Heart right ventricle (tissue), 16 donors: ENCODE measurements at regions of chr9 and their contacts with region 1.

Region 1: GRCh38 chr9:127943731-127944144 is 6.1 kb upstream of the DPM2 start:
- DNase-seq: peak; percentile 86
- ATAC-seq: peak; percentile 64 to 88 (median 82)
- H3K4me3 ChIP-seq: no peak overlapping the region
- H3K27ac ChIP-seq: peak overlapping the region in 1 of 10 donors; percentile 1
- H3K4me1 ChIP-seq: peaks cover 0 to 61% (median 17%) of the 10 kb centered on the region in 9 donors
- H3K27me3 ChIP-seq: no peaks in the 10 kb centered on the region
- CTCF ChIP-seq: peak; percentile 81 to 96 (median 89)

Region 2: GRCh38 chr9:127980706-127981558 is 37.2 kb after region 1 on chr9 and contains the start of gene EEIG1:
- intact Hi-C with region 1: loop called in 3 of 10 experiments (anchors 2 to 5 kb)
- DNase-seq: peak; percentile 96 to 98
- ATAC-seq: peak; percentile 94 to 97 (median 96)
- H3K4me3 ChIP-seq: peak within 1 kb of the TSS; percentile 60 to 97 (median 81)
- H3K27ac ChIP-seq: peak within 1 kb of the TSS; percentile 52 to 94 (median 92)
- H3K4me1 ChIP-seq: peaks cover 19 to 64% (median 50%) of the 10 kb centered on the region in 9 donors
- H3K27me3 ChIP-seq: peaks cover 0 to 7% (median 0%) of the 10 kb centered on the region in 7 donors
- CTCF ChIP-seq: no peak
- total RNA-seq, gene EEIG1: 11.1 to 33.5 (median 25.1) TPM

Region 3: GRCh38 chr9:128020692-128021091 is 77.0 kb after region 1 on chr9:
- intact Hi-C with region 1: no loop called
- DNase-seq: no peak
- ATAC-seq: no peak
- H3K4me3 ChIP-seq: no peak overlapping the region
- H3K27ac ChIP-seq: no peak overlapping the region
- H3K4me1 ChIP-seq: peaks cover 0 to 32% (median 0%) of the 10 kb centered on the region in 9 donors
- H3K27me3 ChIP-seq: no peaks in the 10 kb centered on the region
- CTCF ChIP-seq: peak in 4 of 9 donors; percentile 17 to 29 (median 21)

Region 4: DNA sequence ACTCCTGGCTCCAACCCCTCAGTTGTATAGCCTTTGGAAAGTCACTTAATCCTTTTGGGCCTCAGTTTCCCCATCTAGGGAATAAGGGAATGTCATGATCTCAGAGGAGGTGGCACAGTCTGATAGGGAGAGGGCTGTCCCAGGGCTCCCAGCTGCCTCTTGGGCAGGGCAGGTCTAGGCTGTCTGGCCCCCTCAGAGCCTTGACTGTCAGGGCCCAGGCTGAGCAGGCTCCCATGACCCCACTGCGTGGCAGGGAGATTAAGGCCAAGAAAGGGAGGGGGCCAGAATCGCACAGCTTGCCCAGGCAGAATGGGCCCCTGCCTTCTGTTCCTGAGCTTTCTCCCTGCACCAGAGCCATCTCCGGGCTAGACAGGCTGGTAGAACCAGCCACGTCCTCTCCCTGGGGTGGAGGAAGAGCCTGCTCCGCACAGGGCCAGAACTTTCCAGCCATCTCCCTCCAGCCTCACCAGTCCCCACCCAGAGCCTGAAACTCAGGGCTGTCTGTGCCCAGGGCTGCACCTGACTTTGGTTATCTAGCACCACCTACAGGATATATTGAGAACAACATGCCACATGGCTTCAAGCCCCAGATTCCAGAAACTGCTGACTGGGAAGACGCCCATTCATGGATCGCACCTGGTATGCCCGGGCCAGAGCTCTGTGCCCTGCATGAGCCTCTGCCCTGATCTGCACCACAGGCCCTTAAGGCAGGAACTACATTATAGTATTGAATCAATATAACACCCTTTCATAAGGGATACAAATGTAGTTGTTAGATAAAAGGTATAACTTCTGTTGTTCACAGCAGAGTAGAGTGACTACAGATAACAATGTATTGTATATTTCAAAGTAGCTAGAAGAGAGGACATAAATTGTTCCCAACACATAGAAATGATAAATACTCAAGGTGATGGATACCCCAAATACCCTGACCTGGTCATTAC is 91.4 kb after region 1 on chr9:
- intact Hi-C with region 1: loop called (anchors 1 to 5 kb)
- DNase-seq: peak; percentile 44 to 71
- ATAC-seq: peak; percentile 93 to 98 (median 94)
- H3K4me3 ChIP-seq: no peak overlapping the region
- H3K27ac ChIP-seq: peak overlapping the region in 2 of 10 donors; percentile 21 to 25
- H3K4me1 ChIP-seq: peaks cover 0 to 10% (median 4%) of the 10 kb centered on the region in 9 donors
- H3K27me3 ChIP-seq: no peaks in the 10 kb centered on the region
- CTCF ChIP-seq: peak; percentile 69 to 90 (median 87)

Region 5: GRCh38 chr9:128043467-128043868 is 99.7 kb after region 1 on chr9:
- intact Hi-C with region 1: loop called in 1 of 10 experiments (anchors 5 kb)
- DNase-seq: no peak
- ATAC-seq: no peak
- H3K4me3 ChIP-seq: no peak overlapping the region
- H3K27ac ChIP-seq: no peak overlapping the region
- H3K4me1 ChIP-seq: no peaks in the 10 kb centered on the region
- H3K27me3 ChIP-seq: no peaks in the 10 kb centered on the region
- CTCF ChIP-seq: no peak

Region 6: GRCh38 chr9:128117613-128118471 is 174.1 kb after region 1 on chr9:
- intact Hi-C with region 1: loop called in 8 of 10 experiments (anchors 1 to 10 kb)
- DNase-seq: peak; percentile 93 to 98
- ATAC-seq: peak; percentile 42 to 85 (median 72)
- H3K4me3 ChIP-seq: peak overlapping the region in 1 of 10 donors; percentile 28
- H3K27ac ChIP-seq: peak overlapping the region in 1 of 10 donors; percentile 6
- H3K4me1 ChIP-seq: peaks cover 0 to 12% (median 8%) of the 10 kb centered on the region in 9 donors
- H3K27me3 ChIP-seq: no peaks in the 10 kb centered on the region
- CTCF ChIP-seq: peak; percentile 100